Right cardiac atrium (tissue), 5 donors: ENCODE measurements at regions of chr7 and their contacts with region 1.

Region 1: DNA sequence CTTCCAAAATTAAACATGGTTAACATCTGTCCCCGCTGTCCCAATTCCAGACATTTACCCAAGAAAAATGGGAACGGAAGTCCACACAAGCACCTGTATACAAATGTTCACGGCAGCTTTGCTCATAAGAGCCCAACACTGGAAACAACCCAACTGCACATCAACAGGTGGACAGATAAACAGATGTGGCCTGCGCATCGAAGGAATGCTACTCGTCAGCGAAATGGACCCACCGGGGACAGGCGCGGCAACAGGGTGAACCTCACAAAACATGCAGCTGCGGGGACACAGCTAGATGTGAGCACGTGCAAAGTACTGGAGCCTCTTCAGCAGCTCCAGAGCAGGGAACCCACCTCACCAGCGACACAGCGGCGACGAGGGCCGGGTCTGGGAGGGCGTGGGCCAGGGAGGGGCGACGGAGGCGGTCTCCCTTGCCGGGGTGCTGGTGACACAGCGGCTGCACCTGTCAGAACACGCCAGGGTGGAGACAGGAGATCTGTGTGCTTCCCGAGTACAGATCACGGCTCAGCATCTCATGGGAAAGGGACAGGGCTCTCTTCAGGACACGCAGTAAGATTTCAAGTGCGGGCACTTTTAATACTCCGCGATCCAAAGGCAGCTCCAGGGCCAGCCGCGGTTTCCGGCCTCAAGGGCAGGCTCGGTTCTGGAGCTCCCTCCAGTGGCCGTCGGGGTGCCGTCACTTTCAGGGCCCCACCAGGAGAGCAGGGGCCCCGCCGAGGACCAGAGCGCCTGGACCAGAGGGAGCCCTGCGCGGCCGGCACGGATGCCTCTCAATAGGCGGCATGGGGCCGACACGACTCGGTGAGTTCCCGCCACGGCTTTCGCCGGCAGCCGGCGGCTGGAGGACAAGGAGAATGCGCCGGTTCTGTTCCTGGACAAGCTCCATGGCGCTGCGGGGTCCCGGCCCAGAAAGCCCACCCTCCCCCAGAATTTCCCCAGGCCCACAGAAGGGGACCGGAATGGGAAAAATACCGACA is 21.2 kb downstream of the GPR146 start:
- DNase-seq: peak; percentile 88 to 95 (median 95)
- ATAC-seq: peak; percentile 91 to 92
- H3K4me3 ChIP-seq: no peak overlapping the region
- H3K27ac ChIP-seq: no peak overlapping the region
- H3K4me1 ChIP-seq: no peaks in the 10 kb centered on the region
- H3K27me3 ChIP-seq: no peaks in the 10 kb centered on the region

Region 2: GRCh38 chr7:909358-910329 is 155.9 kb before region 1 on chr7:
- intact Hi-C with region 1: loop called in 1 of 4 experiments (anchors 10 kb)
- DNase-seq: peak; percentile 78 to 90 (median 90)
- ATAC-seq: peak; percentile 45 to 83
- H3K4me3 ChIP-seq: no peak overlapping the region
- H3K27ac ChIP-seq: no peak overlapping the region
- H3K4me1 ChIP-seq: no peaks in the 10 kb centered on the region
- H3K27me3 ChIP-seq: no peaks in the 10 kb centered on the region